ENCODE measurements at regions of chr5 and their contacts with region 1.

Region 1: GRCh38 chr5:4868109-4868735 is 271.9 kb upstream of the ADAMTS16 start:
- DNase-seq: peak; percentile 56 to 83 (median 74)
- H3K4me3 ChIP-seq: no peak overlapping the region
- H3K27ac ChIP-seq: no peak overlapping the region
- H3K4me1 ChIP-seq: no peaks in the 10 kb centered on the region
- H3K27me3 ChIP-seq: no peaks in the 10 kb centered on the region
- CTCF ChIP-seq: peak; percentile 44 to 62 (median 61)
- EP300 ChIP-seq: no peak
- POLR2A ChIP-seq: no peak

Region 2: GRCh38 chr5:4817767-4818166 is 50.5 kb before region 1 on chr5:
- intact Hi-C with region 1: no loop called
- DNase-seq: no peak
- H3K4me3 ChIP-seq: no peak overlapping the region
- H3K27ac ChIP-seq: no peak overlapping the region
- H3K4me1 ChIP-seq: no peaks in the 10 kb centered on the region
- H3K27me3 ChIP-seq: no peaks in the 10 kb centered on the region
- CTCF ChIP-seq: no peak
- EP300 ChIP-seq: no peak
- POLR2A ChIP-seq: no peak

Region 3: GRCh38 chr5:5421961-5422818 is 554.0 kb after region 1 on chr5 and contains the start of gene ICE1:
- intact Hi-C with region 1: loop called in 1 of 4 experiments (anchors 2 kb)
- DNase-seq: peak; percentile 97 to 98 (median 97)
- H3K4me3 ChIP-seq: peak within 1 kb of the TSS; percentile 75
- H3K27ac ChIP-seq: peak within 1 kb of the TSS; percentile 99 to 100
- H3K4me1 ChIP-seq: peaks cover 17% of the 10 kb centered on the region
- H3K27me3 ChIP-seq: no peaks in the 10 kb centered on the region
- CTCF ChIP-seq: peak in 1 of 3 donors; percentile 4
- EP300 ChIP-seq: peak; percentile 31
- POLR2A ChIP-seq: peak; percentile 76
- total RNA-seq, gene ICE1: 22.7 to 38.0 (median 30.7) TPM